WTC11 (cell line): ENCODE measurements at regions of chr11 and their contacts with region 1.

Region 1: DNA sequence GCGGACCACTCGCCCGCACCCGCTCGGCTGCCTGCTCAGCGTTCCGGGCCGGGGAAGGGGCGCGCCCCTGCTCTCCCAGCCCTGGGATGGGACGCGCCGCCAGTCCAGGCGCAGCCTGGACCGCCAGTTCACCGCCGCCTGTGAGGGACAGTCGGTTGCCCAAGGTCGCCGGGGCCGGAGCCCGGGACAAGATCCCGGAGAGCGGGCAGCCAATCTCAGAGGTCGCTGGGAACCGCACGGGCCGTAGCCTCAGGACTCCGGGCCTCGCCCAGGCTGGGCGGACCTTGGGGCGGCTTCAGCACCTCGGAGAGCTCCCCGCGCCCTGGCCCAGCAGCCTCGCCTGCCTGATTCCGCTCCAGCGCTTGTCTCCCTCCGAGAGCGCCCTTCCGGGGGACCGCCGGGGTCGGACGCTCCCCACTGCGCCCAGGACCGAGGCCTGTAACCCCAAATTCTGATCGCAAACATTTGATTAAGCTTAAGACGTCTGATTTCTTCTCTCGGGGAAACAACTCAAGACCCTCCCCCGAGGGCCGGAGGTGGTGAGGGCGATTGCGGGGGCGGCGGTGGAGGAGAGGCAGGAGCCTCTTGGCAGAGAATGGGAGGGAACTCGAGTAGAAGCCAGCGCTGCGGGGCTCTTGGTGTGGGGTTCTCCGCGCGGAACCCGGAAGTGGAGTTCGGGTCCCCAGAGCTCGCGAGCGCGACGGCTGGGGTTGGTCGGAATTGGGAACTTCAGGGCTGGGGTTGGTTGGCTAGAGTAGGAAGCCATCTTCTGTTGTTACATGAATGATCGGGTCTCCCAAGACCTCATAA is 1.1 kb upstream of the CHRM4 start:
- DNase-seq: peak; percentile 92
- ATAC-seq: peak; percentile 66
- H3K4me3 Mint-ChIP-seq: peak overlapping the region; percentile 84
- H3K27ac Mint-ChIP-seq: no peak overlapping the region
- H3K4me1 Mint-ChIP-seq: peaks cover 25% of the 10 kb centered on the region
- H3K27me3 Mint-ChIP-seq: peaks cover 49% of the 10 kb centered on the region
- CTCF ChIP-seq: no peak

Region 2: DNA sequence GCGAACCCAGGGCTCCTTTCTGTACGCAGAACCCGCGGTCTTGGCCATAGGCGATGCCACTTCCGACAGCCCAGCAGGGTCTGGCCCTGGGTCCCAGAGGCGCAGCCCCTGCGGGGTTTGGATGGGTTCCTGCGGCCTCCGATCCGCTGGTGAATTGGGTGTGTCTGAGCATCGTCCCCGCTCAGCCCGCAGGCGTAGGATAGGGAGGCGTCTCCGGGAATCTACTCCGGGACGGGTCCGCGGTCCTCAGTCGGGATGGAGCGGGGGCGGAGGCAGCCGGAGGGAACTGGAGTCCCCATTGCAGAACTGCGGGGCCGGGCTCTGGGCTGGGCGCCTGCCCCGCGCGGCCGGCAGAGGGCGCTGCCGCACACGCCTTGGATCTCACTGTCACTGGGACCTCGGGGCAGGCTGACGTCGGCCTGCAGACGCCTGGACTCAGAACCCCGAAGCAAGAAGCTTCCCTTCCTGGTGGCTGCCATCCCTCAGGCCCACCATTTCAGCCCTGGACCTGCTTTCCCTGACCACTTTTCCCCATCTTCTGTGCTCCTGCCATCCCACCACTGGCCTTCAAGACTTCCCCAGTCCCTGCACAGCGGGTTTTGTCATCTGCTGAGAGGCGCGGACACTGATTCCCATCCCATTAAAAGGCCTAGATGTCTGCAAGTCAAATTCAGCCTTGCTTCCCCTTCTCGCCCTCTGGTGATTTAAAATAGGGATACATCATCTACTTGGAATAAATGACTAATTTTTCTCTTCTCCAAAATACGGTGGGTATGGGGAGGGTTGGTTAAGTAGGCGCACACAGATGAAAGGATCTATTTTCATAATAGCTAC is 153.4 kb before region 1 on chr11:
- CTCF ChIA-PET with region 1: interaction called, 23 read pairs
- POLR2A ChIA-PET with region 1: no interaction called
- DNase-seq: peak; percentile 96
- ATAC-seq: peak; percentile 80
- H3K4me3 Mint-ChIP-seq: peak overlapping the region; percentile 66
- H3K27ac Mint-ChIP-seq: no peak overlapping the region
- H3K4me1 Mint-ChIP-seq: peaks cover 44% of the 10 kb centered on the region
- H3K27me3 Mint-ChIP-seq: peaks cover 43% of the 10 kb centered on the region
- CTCF ChIP-seq: peak; percentile 97

Region 3: GRCh38 chr11:46338988-46339666 is 53.5 kb before region 1 on chr11:
- CTCF ChIA-PET with region 1: interaction called, 10 read pairs
- POLR2A ChIA-PET with region 1: no interaction called
- DNase-seq: peak; percentile 83
- ATAC-seq: peak; percentile 89
- H3K4me3 Mint-ChIP-seq: peak overlapping the region; percentile 60
- H3K27ac Mint-ChIP-seq: peak overlapping the region; percentile 99
- H3K4me1 Mint-ChIP-seq: peaks cover 96% of the 10 kb centered on the region
- H3K27me3 Mint-ChIP-seq: peaks cover 9% of the 10 kb centered on the region
- CTCF ChIP-seq: no peak

Region 4: GRCh38 chr11:46373787-46374740 is 18.6 kb before region 1 on chr11:
- CTCF ChIA-PET with region 1: interaction called, 29 read pairs
- POLR2A ChIA-PET with region 1: interaction called, 6 read pairs
- DNase-seq: no peak
- ATAC-seq: no peak
- H3K4me3 Mint-ChIP-seq: no peak overlapping the region
- H3K27ac Mint-ChIP-seq: no peak overlapping the region
- H3K4me1 Mint-ChIP-seq: peaks cover 14% of the 10 kb centered on the region
- H3K27me3 Mint-ChIP-seq: no peaks in the 10 kb centered on the region
- CTCF ChIP-seq: no peak

Region 5: DNA sequence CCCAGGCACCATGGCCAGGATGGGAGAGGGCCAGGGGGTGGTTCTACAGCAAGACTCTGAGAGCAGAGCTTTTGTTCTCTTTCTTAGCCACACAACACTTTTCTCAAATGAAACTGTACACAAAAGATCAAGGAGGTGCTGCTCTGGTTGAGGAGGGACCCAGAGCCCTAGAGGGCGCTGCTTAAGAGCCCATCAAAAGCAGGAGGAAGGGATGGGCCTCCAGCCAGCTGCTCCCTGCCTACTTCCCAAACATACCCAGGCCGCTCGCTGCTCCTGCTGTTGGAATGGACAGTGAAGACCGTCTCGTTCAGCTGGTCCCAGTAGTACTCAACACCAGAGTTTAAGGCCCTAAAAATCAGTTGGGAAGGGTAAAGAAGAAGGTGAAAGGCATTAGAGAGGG is 17.4 kb after region 1 on chr11:
- CTCF ChIA-PET with region 1: interaction called, 96 read pairs
- POLR2A ChIA-PET with region 1: interaction called, 3 read pairs
- DNase-seq: peak; percentile 68
- ATAC-seq: peak; percentile 95
- H3K4me3 Mint-ChIP-seq: no peak overlapping the region
- H3K27ac Mint-ChIP-seq: no peak overlapping the region
- H3K4me1 Mint-ChIP-seq: no peaks in the 10 kb centered on the region
- H3K27me3 Mint-ChIP-seq: no peaks in the 10 kb centered on the region
- CTCF ChIP-seq: no peak

Region 6: GRCh38 chr11:46438211-46438610 is 45.6 kb after region 1 on chr11:
- CTCF ChIA-PET with region 1: no interaction called
- POLR2A ChIA-PET with region 1: no interaction called
- DNase-seq: no peak
- ATAC-seq: peak; percentile 35; the same call in 1 of the 2 replicates
- H3K4me3 Mint-ChIP-seq: no peak overlapping the region
- H3K27ac Mint-ChIP-seq: no peak overlapping the region
- H3K4me1 Mint-ChIP-seq: peaks cover 42% of the 10 kb centered on the region
- H3K27me3 Mint-ChIP-seq: peaks cover 31% of the 10 kb centered on the region
- CTCF ChIP-seq: no peak

Region 7: DNA sequence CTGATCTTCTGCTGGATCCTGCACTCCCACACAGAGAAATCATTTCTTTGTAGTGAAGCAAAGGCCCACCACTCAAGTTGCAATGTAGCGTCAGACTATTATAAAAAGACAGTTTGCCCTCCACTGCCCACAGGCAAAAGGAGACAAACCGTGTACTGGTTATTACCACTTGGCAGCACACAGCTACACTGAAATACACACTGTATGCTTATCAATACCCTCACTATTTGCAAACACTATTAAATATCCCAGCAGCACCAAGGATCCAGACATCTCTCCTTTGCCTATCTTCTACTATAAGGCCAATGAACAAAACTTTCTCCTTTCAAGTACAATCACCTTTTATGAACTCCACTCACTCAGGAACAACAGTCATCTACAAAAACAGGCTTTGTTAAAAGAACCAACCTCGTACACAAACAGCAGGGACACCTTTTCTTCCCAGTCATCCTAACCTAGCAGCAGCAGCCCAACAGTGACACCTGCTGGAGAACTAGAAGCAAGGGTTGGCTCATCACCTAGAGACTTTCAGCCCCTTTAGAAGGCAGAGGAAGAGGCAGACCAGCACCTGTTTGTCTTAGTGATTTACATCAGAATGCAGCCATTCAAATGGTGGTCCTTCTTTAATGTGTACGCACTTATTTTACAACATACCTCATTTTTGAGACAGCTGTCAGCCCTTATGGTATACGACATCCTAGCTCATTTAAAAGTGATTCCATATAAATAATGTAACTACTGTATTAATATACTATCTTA is 145.1 kb after region 1 on chr11:
- CTCF ChIA-PET with region 1: interaction called, 13 read pairs
- POLR2A ChIA-PET with region 1: no interaction called
- DNase-seq: peak; percentile 76
- ATAC-seq: peak; percentile 97
- H3K4me3 Mint-ChIP-seq: peak overlapping the region; percentile 31
- H3K27ac Mint-ChIP-seq: peak overlapping the region; percentile 92
- H3K4me1 Mint-ChIP-seq: peaks cover 37% of the 10 kb centered on the region
- H3K27me3 Mint-ChIP-seq: no peaks in the 10 kb centered on the region
- CTCF ChIP-seq: peak; percentile 57